Activated T-helper 2 cell treated with anti-CD3 and anti-CD28 coated beads, Interferon-gamma antibody, Interleukin-2, Interleukin-4, amounts not matched to agents 10 μg/mL and 5 μg/mL and 100 μg/mL, durations not matched to agents 14 hours and 24 hours and 36 hours (primary cell): ENCODE measurements at regions of chr10 and their contacts with region 1.

Region 1: DNA sequence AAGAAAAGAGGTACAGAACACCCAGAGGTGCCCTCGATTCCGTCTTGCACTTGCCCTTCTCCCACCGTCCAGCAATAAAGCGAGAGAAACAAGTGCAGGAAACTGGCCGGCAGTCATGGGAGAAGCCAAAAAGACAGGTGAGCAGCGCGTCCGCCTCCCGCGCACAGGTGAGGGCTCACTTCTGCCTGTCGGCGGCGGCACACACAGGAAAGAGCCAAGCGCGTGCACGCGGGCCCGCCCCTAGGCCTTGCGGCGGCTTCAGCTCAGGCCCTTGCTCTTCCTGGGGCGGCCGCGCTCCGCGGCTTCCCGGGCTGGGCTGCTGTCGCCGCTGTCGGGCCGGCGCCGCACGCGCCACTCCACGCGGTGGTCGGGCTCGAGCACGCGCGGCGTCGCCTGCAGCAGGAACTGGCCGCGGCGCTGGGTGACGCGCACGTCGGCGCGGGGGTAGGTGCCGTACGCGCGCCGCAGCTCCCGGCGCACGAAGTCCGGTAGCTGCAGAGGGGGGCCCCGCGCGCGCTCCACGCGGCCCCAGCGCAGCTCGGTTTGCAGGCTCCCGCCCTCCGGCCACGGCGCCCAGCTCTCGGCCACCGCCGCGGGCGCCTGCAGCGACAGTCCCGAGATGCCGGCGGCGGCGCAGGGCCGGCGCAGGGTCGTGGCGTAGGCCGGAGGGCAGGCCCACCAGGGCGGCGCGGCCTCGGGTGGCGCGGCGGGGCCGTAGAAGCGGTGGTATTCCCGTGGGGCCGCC is 977 bp downstream of the C10orf95 start:
- DNase-seq: peak; percentile 88
- H3K4me3 Mint-ChIP-seq: peak overlapping the region; percentile 94
- H3K27ac Mint-ChIP-seq: peak overlapping the region; percentile 87
- H3K4me1 Mint-ChIP-seq: peaks cover 23% of the 10 kb centered on the region
- H3K27me3 Mint-ChIP-seq: no peaks in the 10 kb centered on the region

Region 2: DNA sequence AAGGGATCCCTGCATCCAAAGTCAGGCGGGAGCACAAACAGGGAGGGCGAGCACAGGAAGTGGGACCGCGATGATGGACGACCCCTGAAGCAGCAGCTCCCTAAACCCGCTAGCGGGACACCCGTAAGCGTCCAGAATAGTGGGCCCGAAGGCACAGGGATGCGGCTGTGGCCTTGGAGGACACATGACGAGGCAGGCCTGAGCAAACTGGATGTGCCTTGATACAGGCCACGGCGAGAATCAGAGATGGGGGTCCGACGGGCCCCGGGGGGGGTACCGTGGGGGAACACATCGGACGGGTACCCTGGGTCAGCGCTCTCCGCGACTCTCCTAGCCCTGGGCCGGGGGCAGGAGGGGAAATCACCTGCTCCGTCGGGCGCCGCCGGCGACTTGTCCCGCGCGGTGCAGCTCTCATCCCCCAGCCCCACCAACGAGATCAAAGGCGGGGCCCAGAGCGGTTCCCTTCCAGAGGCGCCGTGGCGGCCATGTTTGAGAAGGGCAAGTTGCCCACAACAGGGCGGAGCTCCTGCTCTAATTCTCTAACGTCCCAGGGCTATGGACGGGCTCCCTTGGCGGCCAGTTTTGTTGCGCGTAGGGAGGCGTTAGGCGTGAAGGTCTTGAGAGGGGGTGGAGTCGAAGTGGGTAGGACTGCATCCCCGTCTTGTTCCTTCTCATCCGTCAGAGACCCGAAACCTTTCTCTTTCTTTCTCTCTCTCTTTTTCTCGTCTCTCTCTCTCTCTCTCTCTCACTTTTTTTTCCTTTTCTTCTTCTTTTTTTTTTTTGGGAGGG is 18.0 kb before region 1 on chr10 and contains the start of gene CUEDC2:
- intact Hi-C with region 1: loop called (anchors 1 kb)
- DNase-seq: peak; percentile 96
- H3K4me3 Mint-ChIP-seq: peak within 1 kb of the TSS; percentile 92
- H3K27ac Mint-ChIP-seq: peak within 1 kb of the TSS; percentile 93
- H3K4me1 Mint-ChIP-seq: peaks cover 41% of the 10 kb centered on the region
- H3K27me3 Mint-ChIP-seq: no peaks in the 10 kb centered on the region
- total RNA-seq, gene CUEDC2: 60.7 and 67.5 TPM in 2 replicates

Region 3: GRCh38 chr10:102461187-102462054 is 11.1 kb after region 1 on chr10:
- intact Hi-C with region 1: loop called (anchors 1 kb)
- DNase-seq: peak; percentile 88
- H3K4me3 Mint-ChIP-seq: peak overlapping the region; percentile 90
- H3K27ac Mint-ChIP-seq: peak overlapping the region; percentile 85
- H3K4me1 Mint-ChIP-seq: peaks cover 24% of the 10 kb centered on the region
- H3K27me3 Mint-ChIP-seq: no peaks in the 10 kb centered on the region